Activated CD8-positive, alpha-beta T cell treated with anti-CD3 and anti-CD28 coated beads for 36 hours (primary cell): ENCODE measurements at regions of chr14 and their contacts with region 1.

Region 1: DNA sequence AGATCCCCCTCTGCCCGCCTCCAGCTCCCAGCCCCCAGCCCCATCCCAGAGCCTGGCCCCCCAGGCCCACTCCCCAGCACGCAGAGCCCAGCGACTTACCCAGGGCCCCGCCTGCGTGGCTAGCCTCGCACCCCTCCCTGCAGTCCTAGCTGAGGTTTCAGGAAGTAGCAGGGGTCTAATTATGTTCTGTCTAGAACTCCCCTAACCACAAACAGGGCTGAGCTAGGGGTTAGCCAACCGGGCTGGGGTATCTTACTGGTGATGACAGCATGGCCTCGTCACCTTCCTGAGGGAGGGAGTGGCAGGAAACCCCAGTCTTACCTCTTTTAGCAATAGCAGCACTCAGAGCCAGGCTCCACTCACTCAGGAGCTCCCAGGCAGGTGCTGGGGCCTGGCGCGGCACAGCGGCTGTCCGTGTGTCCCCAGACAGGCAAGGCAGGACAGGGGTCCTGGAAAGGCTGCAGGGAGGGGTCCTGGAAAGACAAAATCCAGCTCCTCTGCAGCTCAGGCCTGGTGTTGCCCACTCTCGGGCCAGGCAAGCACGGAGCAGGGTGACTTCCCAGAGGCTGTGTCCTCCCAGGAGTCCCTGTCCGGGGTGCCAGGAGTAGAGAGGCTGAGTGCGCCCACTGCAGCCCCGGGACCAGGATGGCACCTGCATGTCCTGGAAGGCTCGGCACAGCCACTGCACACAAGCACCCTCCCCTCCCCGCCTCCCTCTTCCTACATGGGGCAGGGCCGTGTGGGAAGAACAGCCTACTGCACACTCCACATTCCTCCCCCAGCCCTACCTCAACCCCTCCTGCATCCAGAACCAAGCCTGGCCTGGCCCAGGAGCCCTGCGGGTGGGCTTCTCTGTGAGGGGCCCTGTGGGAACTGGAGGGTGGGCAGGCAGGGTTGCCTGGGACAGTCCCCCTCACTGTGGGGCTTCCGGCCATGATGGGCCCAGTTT is at the start of gene GPR132:
- DNase-seq: peak; percentile 96
- ATAC-seq: peak; percentile 74
- H3K4me3 Mint-ChIP-seq: peak within 1 kb of the TSS; percentile 86
- H3K27ac Mint-ChIP-seq: peak within 1 kb of the TSS; percentile 96
- H3K4me1 Mint-ChIP-seq: peaks cover 62% of the 10 kb centered on the region
- H3K27me3 Mint-ChIP-seq: no peaks in the 10 kb centered on the region
- CTCF ChIP-seq: no peak
- total RNA-seq, gene GPR132: 15.1 to 16.4 TPM

Region 2: DNA sequence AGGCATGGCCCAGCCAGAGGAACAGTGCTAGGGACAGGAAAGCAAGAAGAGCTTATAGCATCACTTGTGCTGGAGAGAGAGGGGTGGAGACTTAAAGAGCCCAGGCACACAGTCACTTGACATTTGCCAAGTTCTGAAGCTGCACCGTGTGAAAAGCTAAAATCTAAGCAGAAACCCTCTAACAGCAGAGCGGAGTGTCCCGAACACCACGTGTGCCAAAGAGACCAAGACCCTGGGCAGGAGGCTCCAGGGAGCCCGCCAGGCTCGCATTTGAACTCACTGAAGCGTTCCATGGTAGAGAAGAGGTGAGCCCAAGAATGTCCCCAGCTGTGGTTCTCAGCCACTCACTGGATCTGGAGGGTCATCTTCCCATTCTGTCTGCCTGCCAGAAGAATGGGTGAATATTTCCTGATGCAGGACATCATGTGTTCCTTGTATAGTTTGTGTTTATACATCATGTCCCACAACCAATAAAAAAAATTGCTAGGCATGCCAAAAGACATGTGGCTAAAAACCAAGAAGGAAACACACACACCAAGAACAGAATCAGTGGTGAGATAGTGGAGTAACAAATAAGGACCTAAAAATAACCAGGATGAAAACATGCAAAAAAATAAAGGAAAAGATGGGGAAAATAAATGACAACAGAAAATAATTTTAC is 659.9 kb before region 1 on chr14:
- CTCF ChIA-PET with region 1: no interaction called
- POLR2A ChIA-PET with region 1: no interaction called
- intact Hi-C with region 1: no loop called
- DNase-seq: no peak
- ATAC-seq: no peak
- H3K4me3 Mint-ChIP-seq: no peak overlapping the region
- H3K27ac Mint-ChIP-seq: no peak overlapping the region
- H3K4me1 Mint-ChIP-seq: no peaks in the 10 kb centered on the region
- H3K27me3 Mint-ChIP-seq: no peaks in the 10 kb centered on the region
- CTCF ChIP-seq: no peak

Region 3: DNA sequence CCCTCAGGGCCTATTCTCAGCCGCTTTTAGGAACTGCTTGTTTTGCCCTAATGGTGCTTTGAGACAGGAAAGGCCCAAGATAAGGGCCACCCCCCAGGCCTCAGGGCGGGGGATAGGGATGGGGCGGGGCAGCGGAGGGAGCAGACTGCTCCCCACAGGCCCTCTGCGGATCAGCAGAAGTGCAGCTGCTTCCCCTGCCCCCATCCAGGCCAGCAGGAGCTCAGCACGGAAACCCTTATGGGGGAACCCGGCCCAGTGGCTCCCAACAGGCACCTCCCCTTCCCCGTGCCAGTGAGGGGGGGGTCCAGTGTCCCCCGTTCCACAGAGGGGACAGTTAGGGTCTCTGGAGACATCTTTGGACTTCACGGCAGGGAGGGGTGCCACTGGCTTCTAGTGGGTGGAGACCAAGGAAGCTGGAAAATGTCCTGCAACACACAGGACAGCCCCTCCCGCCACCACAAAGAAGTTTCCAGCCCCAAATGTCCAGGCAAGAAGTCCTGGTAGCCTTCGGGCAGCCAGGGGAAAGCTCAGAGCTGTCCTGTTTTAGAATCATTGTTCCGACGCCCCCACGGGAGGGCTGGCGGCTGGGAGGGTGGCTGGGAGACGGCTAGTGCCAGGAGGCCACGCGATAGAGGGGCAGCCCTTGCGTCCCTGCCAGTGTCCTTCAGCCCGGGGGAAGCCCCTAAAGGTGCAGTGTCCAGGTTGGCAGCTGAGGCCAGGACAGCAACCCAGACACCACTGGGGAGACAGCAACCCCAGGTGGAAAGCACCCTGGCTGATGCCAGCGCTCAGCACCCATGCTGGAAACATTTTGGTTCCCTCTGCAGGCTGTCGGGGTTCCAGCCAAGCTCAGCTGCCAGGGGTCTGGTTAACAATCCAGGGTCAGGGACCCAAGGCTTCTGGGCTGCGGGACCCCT is 10.1 kb after region 1 on chr14:
- CTCF ChIA-PET with region 1: interaction called, 15 read pairs
- POLR2A ChIA-PET with region 1: interaction called, 32 read pairs
- intact Hi-C with region 1: no loop called
- DNase-seq: peak; percentile 77
- ATAC-seq: peak; percentile 81
- H3K4me3 Mint-ChIP-seq: no peak overlapping the region
- H3K27ac Mint-ChIP-seq: peak overlapping the region; percentile 74
- H3K4me1 Mint-ChIP-seq: peaks cover 33% of the 10 kb centered on the region
- H3K27me3 Mint-ChIP-seq: no peaks in the 10 kb centered on the region
- CTCF ChIP-seq: no peak

Region 4: GRCh38 chr14:105118656-105119403 is 53.3 kb after region 1 on chr14:
- CTCF ChIA-PET with region 1: no interaction called
- POLR2A ChIA-PET with region 1: no interaction called
- intact Hi-C with region 1: no loop called
- DNase-seq: no peak
- ATAC-seq: no peak
- H3K4me3 Mint-ChIP-seq: no peak overlapping the region
- H3K27ac Mint-ChIP-seq: no peak overlapping the region
- H3K4me1 Mint-ChIP-seq: no peaks in the 10 kb centered on the region
- H3K27me3 Mint-ChIP-seq: peaks cover 17% of the 10 kb centered on the region
- CTCF ChIP-seq: no peak